ENCODE measurements at regions of chr6 and their contacts with region 1.

Region 1: DNA sequence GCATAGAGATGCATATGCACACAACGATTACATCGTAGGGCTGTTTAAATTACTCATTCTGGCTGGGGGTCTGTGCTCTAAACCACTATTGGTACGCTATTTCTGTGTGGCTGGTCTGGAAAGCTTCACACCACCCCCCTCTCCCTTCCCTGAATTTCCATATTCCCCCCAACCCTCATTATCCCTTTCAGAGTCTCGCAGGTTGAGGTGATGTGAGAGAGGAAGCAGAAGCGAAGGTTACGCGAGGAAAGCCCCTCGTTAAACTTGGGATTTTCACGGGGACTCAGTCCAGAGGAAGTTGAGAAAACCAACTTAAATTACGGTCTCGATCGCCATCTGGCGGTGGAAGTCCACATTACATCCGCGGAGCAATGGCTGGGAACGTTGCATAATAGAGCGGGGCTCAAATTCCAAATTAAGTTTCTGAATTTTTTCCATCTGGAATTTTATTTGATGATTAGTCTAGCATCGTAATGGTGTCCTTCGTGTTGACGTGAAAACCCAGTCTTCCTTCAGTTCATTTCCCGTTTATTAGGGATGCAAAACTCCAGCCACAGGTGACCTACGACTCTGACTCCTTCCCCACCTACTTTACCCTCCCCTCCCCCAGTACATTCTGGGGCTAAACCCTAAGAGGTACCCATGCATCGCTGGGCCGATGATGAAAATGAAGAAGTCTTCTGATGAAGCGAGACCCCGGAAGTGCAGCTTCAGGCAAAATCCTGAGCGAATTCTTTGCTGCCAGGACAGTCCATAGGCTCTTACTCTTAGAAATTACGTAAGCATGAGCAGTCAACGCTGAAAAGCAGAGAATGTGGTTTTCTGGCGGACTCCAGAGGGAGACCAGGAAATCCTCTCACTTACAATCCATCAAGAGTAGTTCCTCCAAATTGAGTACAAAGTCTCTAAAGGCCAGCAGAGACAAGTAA is 19.7 kb downstream of the HLA-DOB start:
- ATAC-seq: peak; percentile 60 to 95 (median 78)
- H3K4me3 ChIP-seq: peak overlapping the region in 1 of 5 donors; percentile 9
- H3K27ac ChIP-seq: no peak overlapping the region
- H3K4me1 ChIP-seq: no peaks in the 10 kb centered on the region

Region 2: GRCh38 chr6:31639449-31639861 is 1157.7 kb before region 1 on chr6:
- in situ Hi-C with region 1: no loop called
- ATAC-seq: peak in 7 of 8 experiments; percentile 5 to 25 (median 10)
- H3K4me3 ChIP-seq: no peak overlapping the region
- H3K27ac ChIP-seq: no peak overlapping the region
- H3K4me1 ChIP-seq: no peaks in the 10 kb centered on the region

Region 3: DNA sequence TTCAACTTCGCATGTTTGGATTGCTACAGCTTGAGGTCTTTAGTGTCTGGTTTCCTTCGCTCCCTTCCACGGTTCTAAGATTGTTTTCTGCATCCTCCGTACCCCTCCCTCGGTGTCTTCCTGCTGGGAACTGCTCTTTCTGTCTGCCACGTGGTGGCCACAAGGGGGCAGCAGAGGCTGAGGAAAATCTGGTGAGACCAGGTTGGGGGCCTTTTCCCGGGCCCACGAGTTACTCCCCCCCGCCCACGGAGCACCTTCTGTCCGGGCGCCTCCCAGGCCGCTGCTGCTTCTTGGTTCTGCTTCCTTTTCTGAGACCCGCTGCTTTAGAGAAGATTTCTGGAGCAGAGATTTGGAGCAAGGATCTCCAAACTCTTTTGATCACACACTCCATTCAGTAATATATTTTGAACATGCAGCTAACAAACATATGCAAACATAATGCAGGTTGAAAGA is 552.1 kb before region 1 on chr6:
- in situ Hi-C with region 1: loop called in 1 of 9 experiments (anchors 25 kb)
- ATAC-seq: peak; percentile 82 to 96 (median 88)
- H3K4me3 ChIP-seq: no peak overlapping the region
- H3K27ac ChIP-seq: no peak overlapping the region
- H3K4me1 ChIP-seq: no peaks in the 10 kb centered on the region

Region 4: DNA sequence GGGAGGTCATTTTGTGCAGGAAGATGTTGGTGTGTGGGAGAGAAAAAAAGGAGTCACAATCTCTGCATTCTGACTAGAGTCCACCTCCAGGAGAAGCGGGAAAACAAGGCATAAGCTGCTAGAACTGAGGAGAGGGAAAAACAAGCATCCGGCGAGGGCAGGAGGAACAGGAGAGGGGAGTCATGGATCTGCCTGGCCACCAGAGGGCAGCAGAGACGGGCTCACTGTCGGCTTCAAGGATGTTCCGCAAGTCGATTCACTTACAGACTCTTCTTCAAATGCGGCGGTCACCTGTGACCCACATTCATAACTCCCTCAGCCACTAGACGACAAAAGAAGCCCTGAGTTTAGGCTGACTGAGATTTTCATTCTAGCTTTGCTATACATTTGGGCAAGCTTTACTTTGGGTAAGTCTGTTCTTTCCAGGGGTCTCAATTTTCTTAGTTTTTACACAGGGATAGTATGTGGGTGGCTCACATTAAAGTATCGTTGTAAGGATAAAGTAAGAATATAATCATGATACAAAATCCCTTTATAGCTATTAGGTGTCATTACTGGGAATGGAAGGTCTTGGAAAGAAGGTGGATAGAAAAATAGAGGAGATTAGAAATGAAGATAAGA is 383.6 kb before region 1 on chr6:
- in situ Hi-C with region 1: loop called in 5 of 9 experiments (anchors 10 to 25 kb)
- ATAC-seq: peak; percentile 78 to 92 (median 85)
- H3K4me3 ChIP-seq: no peak overlapping the region
- H3K27ac ChIP-seq: no peak overlapping the region
- H3K4me1 ChIP-seq: no peaks in the 10 kb centered on the region

Region 5: GRCh38 chr6:33118525-33119123 is 321.5 kb after region 1 on chr6:
- in situ Hi-C with region 1: no loop called
- ATAC-seq: peak in 1 of 8 experiments; percentile 30
- H3K4me3 ChIP-seq: no peak overlapping the region
- H3K27ac ChIP-seq: no peak overlapping the region
- H3K4me1 ChIP-seq: peaks cover 0 to 11% of the 10 kb centered on the region in 2 donors

Measured in motor neuron (in vitro differentiated cells).